Naive thymus-derived CD4-positive, alpha-beta T cell (primary cell): ENCODE measurements at regions of chr3 and their contacts with region 1.

Region 1: GRCh38 chr3:101466465-101467309 is 46.3 kb downstream of the SENP7 start:
- DNase-seq: peak in 8 of 9 donors; percentile 38 to 82 (median 58)
- ATAC-seq: peak; percentile 67
- H3K4me3 ChIP-seq: no peak overlapping the region
- H3K4me3 Mint-ChIP-seq: peak overlapping the region in 8 of 10 donors; percentile 4 to 86 (median 76)
- H3K27ac ChIP-seq: peak overlapping the region; percentile 63
- H3K27ac Mint-ChIP-seq: peak overlapping the region in 8 of 9 donors; percentile 52 to 96 (median 89)
- H3K4me1 ChIP-seq: peaks cover 3 to 17% of the 10 kb centered on the region in 2 donors
- H3K4me1 Mint-ChIP-seq: peaks cover 38 to 81% (median 72%) of the 10 kb centered on the region in 7 donors
- H3K27me3 ChIP-seq: no peaks in the 10 kb centered on the region
- H3K27me3 Mint-ChIP-seq: no peaks in the 10 kb centered on the region

Region 2: GRCh38 chr3:101381809-101382208 is 84.9 kb before region 1 on chr3:
- CTCF ChIA-PET with region 1: no interaction called
- POLR2A ChIA-PET with region 1: no interaction called
- intact Hi-C with region 1: loop called in 1 of 2 experiments (anchors 5 kb)
- DNase-seq: peak in 6 of 9 donors; percentile 10 to 42 (median 24)
- ATAC-seq: peak; percentile 69
- H3K4me3 ChIP-seq: no peak overlapping the region
- H3K4me3 Mint-ChIP-seq: no peak overlapping the region
- H3K27ac ChIP-seq: no peak overlapping the region
- H3K27ac Mint-ChIP-seq: peak overlapping the region in 1 of 9 donors; percentile 40
- H3K4me1 ChIP-seq: no peaks in the 10 kb centered on the region
- H3K4me1 Mint-ChIP-seq: peaks cover 31 to 89% (median 73%) of the 10 kb centered on the region in 7 donors
- H3K27me3 ChIP-seq: no peaks in the 10 kb centered on the region
- H3K27me3 Mint-ChIP-seq: no peaks in the 10 kb centered on the region

Region 3: DNA sequence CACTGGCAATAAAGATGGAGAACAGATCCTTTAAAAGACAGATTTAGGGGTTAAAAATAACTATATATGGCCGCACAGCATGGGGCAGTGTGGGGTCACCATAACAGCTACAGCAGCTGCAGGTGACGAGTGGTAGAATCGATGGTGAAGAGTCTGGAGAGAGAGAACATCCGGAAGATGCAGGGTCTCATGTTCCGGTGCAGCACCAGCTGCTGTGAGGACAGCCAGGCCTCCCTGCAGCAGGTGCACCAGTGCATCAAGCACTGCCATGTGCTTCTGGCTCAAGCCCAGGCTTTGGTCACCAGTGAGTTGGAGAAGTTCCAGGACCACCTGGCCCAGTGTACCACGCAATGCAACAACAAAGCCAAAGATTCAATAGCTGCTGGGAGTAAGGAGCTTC is 52.6 kb before region 1 on chr3:
- CTCF ChIA-PET with region 1: no interaction called
- POLR2A ChIA-PET with region 1: no interaction called
- intact Hi-C with region 1: loop called in 1 of 2 experiments (anchors 10 kb)
- DNase-seq: no peak
- ATAC-seq: no peak
- H3K4me3 ChIP-seq: no peak overlapping the region
- H3K4me3 Mint-ChIP-seq: peak overlapping the region in 3 of 10 donors; percentile 16 to 30 (median 29)
- H3K27ac ChIP-seq: no peak overlapping the region
- H3K27ac Mint-ChIP-seq: peak overlapping the region in 8 of 9 donors; percentile 38 to 87 (median 72)
- H3K4me1 ChIP-seq: peaks cover 0 to 3% of the 10 kb centered on the region in 2 donors
- H3K4me1 Mint-ChIP-seq: peaks cover 13 to 72% (median 52%) of the 10 kb centered on the region in 7 donors
- H3K27me3 ChIP-seq: no peaks in the 10 kb centered on the region
- H3K27me3 Mint-ChIP-seq: no peaks in the 10 kb centered on the region

Region 4: GRCh38 chr3:101454629-101455028 is 12.1 kb before region 1 on chr3:
- CTCF ChIA-PET with region 1: no interaction called
- POLR2A ChIA-PET with region 1: no interaction called
- intact Hi-C with region 1: loop called in 1 of 2 experiments (anchors 1 kb)
- DNase-seq: no peak
- ATAC-seq: no peak
- H3K4me3 ChIP-seq: no peak overlapping the region
- H3K4me3 Mint-ChIP-seq: no peak overlapping the region
- H3K27ac ChIP-seq: no peak overlapping the region
- H3K27ac Mint-ChIP-seq: peak overlapping the region in 1 of 9 donors; percentile 22
- H3K4me1 ChIP-seq: no peaks in the 10 kb centered on the region
- H3K4me1 Mint-ChIP-seq: peaks cover 1 to 47% (median 38%) of the 10 kb centered on the region in 7 donors
- H3K27me3 ChIP-seq: no peaks in the 10 kb centered on the region
- H3K27me3 Mint-ChIP-seq: no peaks in the 10 kb centered on the region

Region 5: DNA sequence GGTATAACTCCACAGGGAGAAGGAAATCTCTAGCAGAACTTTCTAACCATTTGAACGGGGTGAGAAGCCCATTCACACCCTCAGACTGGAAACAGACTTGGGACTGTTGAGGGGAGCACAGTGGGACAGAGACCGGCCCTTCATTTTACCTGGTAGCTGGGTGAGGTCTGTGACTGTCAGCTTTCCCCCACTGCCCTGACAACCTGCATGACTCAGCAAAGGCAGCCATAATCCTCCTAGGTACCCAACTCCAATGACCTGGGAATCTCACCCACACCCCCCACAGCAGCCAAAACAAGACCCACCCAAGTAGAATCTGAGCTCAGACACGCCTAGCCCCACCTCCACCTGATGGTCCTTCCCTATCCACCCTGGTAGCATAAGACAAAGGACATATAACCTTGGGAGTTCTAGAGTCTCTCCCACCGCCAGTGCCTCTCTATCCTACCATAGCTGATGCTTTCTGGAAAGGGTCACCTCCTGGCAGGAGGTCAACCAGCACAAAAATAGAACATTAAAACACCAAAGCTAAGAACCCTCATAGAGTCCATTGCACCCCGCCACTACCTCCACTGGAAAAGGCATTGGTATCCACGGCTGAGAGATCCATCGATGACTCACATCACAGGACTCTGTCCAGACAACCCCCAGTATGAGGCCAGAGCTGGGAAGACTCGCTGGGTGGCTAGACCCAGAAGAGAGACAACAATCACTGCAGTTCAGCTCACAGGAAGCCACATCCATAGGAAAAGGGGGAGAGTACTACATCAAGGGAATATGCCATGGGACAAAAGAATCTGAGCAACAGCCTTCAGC is 18.3 kb after region 1 on chr3:
- CTCF ChIA-PET with region 1: no interaction called
- POLR2A ChIA-PET with region 1: no interaction called
- intact Hi-C with region 1: loop called in 1 of 2 experiments (anchors 2 kb)
- DNase-seq: no peak
- ATAC-seq: no peak
- H3K4me3 ChIP-seq: no peak overlapping the region
- H3K4me3 Mint-ChIP-seq: peak overlapping the region in 6 of 10 donors; percentile 4 to 56 (median 26)
- H3K27ac ChIP-seq: no peak overlapping the region
- H3K27ac Mint-ChIP-seq: peak overlapping the region in 8 of 9 donors; percentile 17 to 82 (median 60)
- H3K4me1 ChIP-seq: no peaks in the 10 kb centered on the region
- H3K4me1 Mint-ChIP-seq: peaks cover 29 to 94% (median 74%) of the 10 kb centered on the region in 7 donors
- H3K27me3 ChIP-seq: no peaks in the 10 kb centered on the region
- H3K27me3 Mint-ChIP-seq: no peaks in the 10 kb centered on the region

Region 6: DNA sequence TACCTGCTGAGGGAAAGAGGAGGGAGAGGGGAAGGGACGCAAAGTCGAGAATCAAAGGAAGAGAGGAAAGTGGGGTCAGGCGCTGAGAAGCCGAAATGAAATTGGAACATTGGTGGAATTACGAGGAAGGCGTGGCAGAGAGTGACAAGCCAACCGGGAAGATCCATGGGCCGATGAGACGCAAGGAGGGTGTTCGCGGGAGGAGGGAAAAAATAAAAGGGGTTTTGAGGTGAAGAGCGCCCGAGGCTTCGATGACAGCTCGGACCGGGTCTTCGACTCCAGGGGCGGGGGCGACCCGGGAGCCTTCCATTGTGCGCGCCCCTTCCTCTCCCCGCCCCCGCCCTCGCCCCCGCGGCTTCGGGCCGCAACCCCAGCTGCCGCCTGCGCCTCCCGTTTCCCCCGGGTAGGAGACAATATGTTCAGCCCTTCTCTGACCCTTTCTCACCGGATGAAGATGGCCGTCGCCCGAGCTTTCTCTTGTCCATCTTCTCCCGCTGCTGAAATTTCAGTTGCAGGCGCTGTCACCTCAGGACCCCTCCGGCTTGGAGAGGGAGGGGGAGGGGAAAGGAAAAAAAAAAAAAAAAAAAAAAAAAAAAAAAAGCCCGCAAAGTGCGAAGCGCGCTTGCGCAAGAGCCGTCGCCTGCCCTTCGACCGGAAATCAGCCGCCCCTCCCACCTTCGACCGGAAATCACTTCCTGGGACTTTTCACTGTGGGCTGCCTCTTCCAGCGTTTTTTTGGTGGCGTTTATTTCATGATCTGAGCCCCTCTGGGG is 46.1 kb after region 1 on chr3 and contains the start of gene SENP7:
- CTCF ChIA-PET with region 1: interaction called, 3 read pairs
- POLR2A ChIA-PET with region 1: interaction called, 3 read pairs
- intact Hi-C with region 1: loop called in 1 of 2 experiments (anchors 2 kb)
- DNase-seq: peak; percentile 55 to 82 (median 76)
- ATAC-seq: peak; percentile 74
- H3K4me3 ChIP-seq: peak within 1 kb of the TSS; percentile 84
- H3K4me3 Mint-ChIP-seq: peak within 1 kb of the TSS; percentile 98 to 100 (median 100)
- H3K27ac ChIP-seq: peak within 1 kb of the TSS; percentile 92
- H3K27ac Mint-ChIP-seq: peak within 1 kb of the TSS; percentile 96 to 100 (median 98)
- H3K4me1 ChIP-seq: peaks cover 24 to 41% of the 10 kb centered on the region in 2 donors
- H3K4me1 Mint-ChIP-seq: peaks cover 35 to 79% (median 70%) of the 10 kb centered on the region in 7 donors
- H3K27me3 ChIP-seq: no peaks in the 10 kb centered on the region
- H3K27me3 Mint-ChIP-seq: peaks cover 0 to 4% (median 0%) of the 10 kb centered on the region in 5 donors
- total RNA-seq, gene SENP7: 28.8 to 79.0 (median 49.5) TPM